Dorsolateral prefrontal cortex (tissue), 120 donors: ENCODE measurements at regions of chr12 and their contacts with region 1.

Region 1: DNA sequence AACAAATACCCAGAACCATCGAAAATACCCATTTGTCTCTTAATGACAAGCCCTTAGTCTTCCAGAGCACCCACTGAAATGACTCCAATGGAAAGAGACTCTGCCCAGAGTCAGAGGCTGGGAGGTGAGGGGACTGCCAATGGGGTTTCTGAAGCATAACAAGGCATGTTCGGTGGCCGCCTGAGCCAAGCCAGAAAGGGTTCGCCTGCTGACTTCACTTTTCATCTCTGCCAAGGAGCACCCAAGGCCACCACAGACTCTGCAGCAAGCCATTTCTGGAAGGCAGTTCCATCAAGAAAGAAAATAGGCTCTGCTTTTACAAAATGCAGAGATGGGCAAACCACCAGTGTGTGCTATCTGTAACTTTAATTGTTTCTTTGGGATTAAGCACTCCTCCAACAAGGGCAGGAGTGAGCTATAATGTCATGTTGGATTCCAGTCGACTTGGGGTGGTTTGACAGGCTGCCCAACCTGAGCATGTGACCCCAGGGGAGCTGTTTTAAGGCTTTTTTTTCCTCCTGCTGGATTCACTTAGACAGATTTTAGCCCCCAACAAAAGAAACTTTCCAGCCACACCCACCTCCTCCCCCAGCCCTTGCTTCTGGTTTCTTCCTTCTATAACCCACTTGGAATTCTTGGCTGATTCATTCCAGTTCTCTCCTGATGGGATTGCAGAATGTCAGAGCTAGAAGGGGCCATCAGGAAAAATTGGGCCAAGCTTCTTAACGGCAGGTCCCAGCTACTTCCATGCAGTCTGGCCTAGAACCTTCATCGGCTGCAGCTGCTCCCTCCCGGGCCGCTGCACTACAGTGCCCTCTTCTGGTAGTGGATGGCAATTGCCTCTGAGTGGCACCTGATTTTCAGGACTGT is 24.1 kb downstream of the CKAP4 start:
- DNase-seq: peak in 6 of 10 donors; percentile 55 to 77 (median 66)
- H3K4me3 ChIP-seq: no peak overlapping the region
- H3K27ac ChIP-seq: no peak overlapping the region
- H3K27me3 ChIP-seq: no peaks in the 10 kb centered on the region
- CTCF ChIP-seq: peak; percentile 74 to 94 (median 89)

Region 2: GRCh38 chr12:105420659-105421240 is 803.0 kb before region 1 on chr12:
- intact Hi-C with region 1: loop called (anchors 5 kb)
- DNase-seq: peak; percentile 53 to 89 (median 77)
- H3K4me3 ChIP-seq: no peak overlapping the region
- H3K27ac ChIP-seq: no peak overlapping the region
- H3K27me3 ChIP-seq: no peaks in the 10 kb centered on the region
- CTCF ChIP-seq: peak; percentile 79 to 99 (median 93)

Region 3: DNA sequence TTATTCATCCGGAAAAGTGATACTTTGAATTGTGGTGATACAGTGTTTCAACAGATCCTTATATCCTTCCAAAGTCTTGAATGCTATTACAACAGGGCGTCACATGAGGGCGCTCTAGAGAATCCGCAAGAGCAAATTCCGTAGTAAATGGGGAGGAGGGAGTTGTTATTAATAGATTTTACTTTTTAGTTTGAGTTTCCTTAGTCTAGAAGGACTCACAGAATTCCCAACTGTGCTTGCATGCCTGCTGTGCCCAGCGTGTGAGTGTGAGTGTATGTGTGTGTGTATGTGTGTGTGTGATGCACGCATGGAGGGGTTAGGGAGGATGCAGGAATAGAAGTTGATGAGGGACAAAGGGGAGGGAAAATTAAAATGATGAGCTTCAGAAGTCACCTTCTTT is 518.0 kb before region 1 on chr12:
- intact Hi-C with region 1: loop called in 1 of 2 experiments (anchors 10 kb)
- DNase-seq: peak in 5 of 10 donors; percentile 38 to 71 (median 48)
- H3K4me3 ChIP-seq: no peak overlapping the region
- H3K27ac ChIP-seq: peak overlapping the region in 29 of 59 donors; percentile 1 to 71 (median 33)
- H3K27me3 ChIP-seq: no peaks in the 10 kb centered on the region
- CTCF ChIP-seq: peak; percentile 56 to 90 (median 80)

Region 4: GRCh38 chr12:106247674-106248311 is 24.1 kb after region 1 on chr12 and contains the start of gene CKAP4:
- intact Hi-C with region 1: no loop called
- DNase-seq: peak in 4 of 10 donors; percentile 31 to 78 (median 55)
- H3K4me3 ChIP-seq: peak within 1 kb of the TSS; percentile 62 to 92 (median 81)
- H3K27ac ChIP-seq: peak within 1 kb of the TSS; percentile 55 to 97 (median 90)
- H3K27me3 ChIP-seq: no peaks in the 10 kb centered on the region
- CTCF ChIP-seq: no peak
- total RNA-seq, gene CKAP4: 11.0 to 24.2 (median 17.7) TPM

Region 5: DNA sequence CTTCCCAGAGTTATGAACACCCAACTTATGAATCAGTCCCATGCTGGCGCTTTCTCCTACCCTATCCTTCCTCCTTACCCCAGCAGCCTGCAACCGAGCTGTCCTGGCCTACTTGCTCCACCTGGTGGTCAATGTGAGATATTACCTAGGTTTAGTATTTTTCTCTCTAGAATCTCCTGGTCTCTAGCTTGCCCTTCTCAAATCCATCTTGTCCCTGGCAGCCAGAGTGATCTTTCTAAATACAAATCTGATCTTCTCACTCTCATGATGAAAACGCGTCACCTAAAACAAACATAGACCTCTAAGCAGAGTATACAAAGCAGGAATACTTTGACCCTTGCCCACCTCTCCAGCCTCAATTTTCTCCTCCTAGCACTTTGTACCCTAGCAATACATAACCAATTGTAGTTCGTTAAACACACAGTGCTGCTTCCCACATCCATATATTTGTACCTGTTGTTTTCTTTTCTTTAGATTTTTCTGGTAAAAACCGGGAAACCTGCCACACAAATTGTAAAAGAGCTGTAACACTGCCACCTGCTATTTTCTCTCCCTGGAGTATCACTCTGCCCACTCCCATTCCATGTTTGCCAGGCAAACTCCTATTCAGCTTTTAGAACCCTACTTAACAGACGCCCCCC is 58.9 kb after region 1 on chr12:
- intact Hi-C with region 1: loop called in 1 of 2 experiments (anchors 5 kb)
- DNase-seq: no peak
- H3K4me3 ChIP-seq: no peak overlapping the region
- H3K27ac ChIP-seq: no peak overlapping the region
- H3K27me3 ChIP-seq: no peaks in the 10 kb centered on the region
- CTCF ChIP-seq: peak in 55 of 56 donors; percentile 36 to 68 (median 57)

Region 6: DNA sequence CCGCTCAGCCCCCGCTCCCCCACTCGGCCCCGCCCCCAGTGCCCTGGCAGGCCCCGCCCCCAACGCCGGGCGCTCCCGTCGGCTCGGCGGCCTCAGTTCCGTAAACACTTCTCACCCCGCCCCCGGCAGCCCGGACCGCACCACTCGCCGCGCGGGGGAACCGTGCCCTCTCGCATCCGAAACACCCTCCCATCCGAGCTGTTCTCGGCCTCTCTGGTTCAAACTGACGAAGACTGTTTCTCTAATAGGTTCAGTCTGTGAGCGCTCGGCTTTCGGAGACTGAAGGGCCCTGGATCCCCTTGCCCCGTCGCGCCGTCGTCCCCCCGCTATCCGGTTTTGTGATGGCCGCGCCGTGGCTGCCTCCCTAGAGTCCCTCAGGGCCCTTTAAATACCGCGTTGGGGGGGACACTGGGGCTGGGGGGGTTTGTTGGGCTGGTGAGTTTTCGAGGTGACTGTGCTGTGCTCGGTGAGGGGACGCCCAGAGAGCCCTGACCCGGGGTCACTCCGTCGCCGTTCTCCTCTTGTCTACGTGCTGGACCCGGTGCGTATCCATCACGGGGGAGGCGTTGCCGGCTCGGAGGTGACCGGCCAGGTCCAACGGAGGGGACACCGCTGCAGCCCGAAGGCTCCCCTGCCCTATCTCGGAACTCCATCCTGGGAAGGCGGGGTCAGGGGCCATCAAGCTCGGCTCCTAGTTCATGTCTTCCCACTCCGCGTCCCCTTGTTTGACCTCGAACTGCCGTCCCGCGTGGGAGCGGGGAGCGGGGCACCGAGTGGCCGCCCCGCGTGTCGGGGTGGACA is 78.9 kb after region 1 on chr12 and contains the start of gene TCP11L2:
- intact Hi-C with region 1: loop called in 1 of 2 experiments (anchors 5 kb)
- DNase-seq: peak; percentile 85 to 93 (median 90)
- H3K4me3 ChIP-seq: peak within 1 kb of the TSS; percentile 66 to 100 (median 93)
- H3K27ac ChIP-seq: peak within 1 kb of the TSS; percentile 88 to 100 (median 98)
- H3K27me3 ChIP-seq: no peaks in the 10 kb centered on the region
- CTCF ChIP-seq: no peak
- total RNA-seq, gene TCP11L2: 20.9 to 141 (median 42.8) TPM

Region 7: DNA sequence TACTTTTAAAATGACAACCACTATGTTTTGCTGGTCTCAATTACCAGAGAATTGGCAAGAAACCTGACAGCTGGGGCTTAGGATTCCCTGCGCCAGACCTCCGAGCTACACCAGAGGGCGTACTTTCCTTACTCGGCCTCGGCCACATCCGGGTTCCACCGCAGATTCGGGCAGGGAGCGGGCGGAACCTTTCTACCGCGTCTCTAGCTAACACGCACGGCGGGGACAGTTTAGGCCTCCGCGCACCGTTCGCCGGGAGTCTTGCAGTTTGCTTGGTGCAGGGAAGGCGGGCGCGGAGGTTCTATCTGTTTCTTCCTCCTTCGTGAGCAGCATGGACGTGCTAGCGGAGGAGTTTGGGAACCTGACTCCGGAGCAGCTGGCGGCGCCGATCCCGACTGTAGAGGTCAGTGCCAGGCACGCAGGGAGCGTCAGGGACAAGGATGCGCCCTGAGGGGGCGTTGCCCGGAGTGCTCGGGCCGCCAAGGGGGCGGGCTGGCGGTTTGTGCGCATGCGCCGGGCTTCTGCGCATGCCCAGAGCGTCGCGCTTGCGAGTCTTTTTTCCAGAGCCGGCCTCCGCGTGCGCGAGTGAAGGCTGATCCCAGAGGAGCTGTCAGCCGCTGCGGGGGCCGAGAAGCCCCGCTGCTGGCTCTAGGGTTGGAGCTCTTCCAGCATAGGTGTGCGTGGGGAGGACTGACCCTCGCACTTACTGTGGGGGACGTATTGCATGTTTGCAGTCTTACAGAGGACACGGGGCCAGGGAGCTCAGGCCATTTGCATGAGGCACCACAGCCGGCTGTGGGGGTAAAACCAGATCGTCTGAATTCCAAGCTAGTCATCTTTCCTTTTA is 134.1 kb after region 1 on chr12 and contains the start of gene POLR3B:
- intact Hi-C with region 1: loop called (anchors 2 to 5 kb)
- DNase-seq: peak; percentile 92 to 96 (median 94)
- H3K4me3 ChIP-seq: peak within 1 kb of the TSS; percentile 39 to 96 (median 82)
- H3K27ac ChIP-seq: peak within 1 kb of the TSS; percentile 83 to 100 (median 99)
- H3K27me3 ChIP-seq: no peaks in the 10 kb centered on the region
- CTCF ChIP-seq: peak; percentile 81 to 98 (median 93)
- total RNA-seq, gene POLR3B: 7.5 to 25.1 (median 12.6) TPM

Region 8: GRCh38 chr12:106415134-106415533 is 191.4 kb after region 1 on chr12:
- intact Hi-C with region 1: no loop called
- DNase-seq: no peak
- H3K4me3 ChIP-seq: no peak overlapping the region
- H3K27ac ChIP-seq: no peak overlapping the region
- H3K27me3 ChIP-seq: no peaks in the 10 kb centered on the region
- CTCF ChIP-seq: no peak

Region 9: GRCh38 chr12:106527356-106527755 is 303.6 kb after region 1 on chr12:
- intact Hi-C with region 1: no loop called
- DNase-seq: no peak
- H3K4me3 ChIP-seq: no peak overlapping the region
- H3K27ac ChIP-seq: no peak overlapping the region
- H3K27me3 ChIP-seq: peaks cover 0 to 8% (median 0%) of the 10 kb centered on the region in 45 donors
- CTCF ChIP-seq: no peak

Region 10: GRCh38 chr12:106919910-106920544 is 696.3 kb after region 1 on chr12:
- intact Hi-C with region 1: loop called in 1 of 2 experiments (anchors 10 kb)
- DNase-seq: no peak
- H3K4me3 ChIP-seq: no peak overlapping the region
- H3K27ac ChIP-seq: no peak overlapping the region
- H3K27me3 ChIP-seq: peaks cover 0 to 6% (median 0%) of the 10 kb centered on the region in 45 donors
- CTCF ChIP-seq: peak; percentile 71 to 98 (median 86)